Thyroid gland (tissue), 4 donors: ENCODE measurements at regions of chr3 and their contacts with region 1.

Region 1: DNA sequence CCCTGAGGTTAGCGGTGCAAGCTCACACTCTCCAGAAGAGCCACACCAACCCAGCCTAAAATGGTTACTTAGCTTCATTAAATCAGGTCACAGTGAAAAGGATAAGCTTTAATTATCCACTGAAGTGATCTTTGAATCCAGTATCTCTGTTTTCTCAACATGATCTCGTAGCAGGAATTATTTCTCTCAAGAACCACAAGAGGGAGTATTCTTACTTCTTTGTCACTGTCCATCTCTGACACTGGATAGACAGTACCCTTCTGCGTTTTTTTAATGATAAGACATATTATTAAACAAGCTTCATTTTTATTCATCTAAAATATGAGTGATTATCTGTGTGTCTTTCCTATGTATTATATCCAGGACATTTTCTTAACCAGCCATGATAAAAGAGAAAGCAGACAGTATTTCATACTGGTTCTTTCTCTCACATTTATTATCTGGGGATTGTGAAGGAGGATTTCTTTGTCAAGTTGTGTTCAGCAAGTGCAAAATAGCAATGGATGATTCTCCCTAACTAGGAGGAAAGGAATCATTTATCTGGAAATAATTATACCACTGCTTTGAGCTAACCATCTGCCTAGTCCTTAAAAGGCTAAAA is 105.4 kb upstream of the CCDC54 start:
- DNase-seq: no peak
- H3K4me3 ChIP-seq: no peak overlapping the region
- H3K27ac ChIP-seq: no peak overlapping the region
- H3K4me1 ChIP-seq: no peaks in the 10 kb centered on the region
- H3K27me3 ChIP-seq: no peaks in the 10 kb centered on the region
- CTCF ChIP-seq: peak; percentile 35 to 74 (median 51)
- POLR2A ChIP-seq: no peak

Region 2: GRCh38 chr3:107414325-107414964 is 142.6 kb after region 1 on chr3:
- intact Hi-C with region 1: loop called (anchors 10 kb)
- DNase-seq: no peak
- H3K4me3 ChIP-seq: no peak overlapping the region
- H3K27ac ChIP-seq: no peak overlapping the region
- H3K4me1 ChIP-seq: no peaks in the 10 kb centered on the region
- H3K27me3 ChIP-seq: no peaks in the 10 kb centered on the region
- CTCF ChIP-seq: no peak
- POLR2A ChIP-seq: no peak

Region 3: DNA sequence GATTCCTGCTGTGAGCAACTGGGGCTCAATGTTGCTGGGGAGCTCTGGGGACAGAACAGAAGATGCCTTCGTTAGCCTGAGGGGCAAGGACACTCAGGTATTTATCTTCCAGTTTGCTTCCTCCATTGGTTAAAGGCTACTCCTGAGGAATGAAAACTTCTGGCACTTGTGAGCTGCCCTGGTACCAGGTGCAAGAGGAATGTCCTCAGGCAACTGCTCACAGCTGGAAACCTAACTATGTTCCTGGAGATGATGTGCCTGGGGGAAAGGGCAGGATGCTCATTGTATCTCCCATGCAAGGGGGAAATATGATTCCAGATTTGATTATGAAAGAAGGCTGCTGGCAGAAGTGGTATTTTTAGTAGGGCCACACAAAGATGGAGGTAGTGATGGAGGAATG is 196.9 kb after region 1 on chr3:
- intact Hi-C with region 1: no loop called
- DNase-seq: no peak
- H3K4me3 ChIP-seq: no peak overlapping the region
- H3K27ac ChIP-seq: no peak overlapping the region
- H3K4me1 ChIP-seq: peaks cover 0 to 4% of the 10 kb centered on the region in 2 donors
- H3K27me3 ChIP-seq: no peaks in the 10 kb centered on the region
- CTCF ChIP-seq: no peak
- POLR2A ChIP-seq: no peak

Region 4: DNA sequence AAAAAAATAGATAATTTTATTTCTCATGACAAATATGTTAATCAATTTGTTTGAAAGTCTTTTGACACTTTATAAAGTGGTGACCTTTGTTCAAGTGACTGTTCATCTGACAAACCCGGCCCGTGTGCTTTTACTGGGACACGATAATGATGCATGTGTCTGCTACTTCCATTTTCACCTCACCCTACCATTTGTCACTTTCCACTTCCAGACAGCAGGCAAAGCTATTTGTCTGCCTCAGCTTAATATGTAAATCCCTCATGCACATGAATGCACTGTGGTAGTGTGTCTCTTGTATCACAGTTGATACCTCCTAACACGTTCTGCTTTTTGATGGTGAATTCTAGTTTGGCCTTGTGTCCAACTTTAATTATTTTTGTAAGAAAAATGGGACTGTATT is 455.2 kb after region 1 on chr3:
- intact Hi-C with region 1: no loop called
- DNase-seq: no peak
- H3K4me3 ChIP-seq: no peak overlapping the region
- H3K27ac ChIP-seq: no peak overlapping the region
- H3K4me1 ChIP-seq: no peaks in the 10 kb centered on the region
- H3K27me3 ChIP-seq: no peaks in the 10 kb centered on the region
- CTCF ChIP-seq: no peak
- POLR2A ChIP-seq: no peak